CD4-positive, alpha-beta memory T cell (primary cell): ENCODE measurements at regions of chr19 and their contacts with region 1.

Region 1: DNA sequence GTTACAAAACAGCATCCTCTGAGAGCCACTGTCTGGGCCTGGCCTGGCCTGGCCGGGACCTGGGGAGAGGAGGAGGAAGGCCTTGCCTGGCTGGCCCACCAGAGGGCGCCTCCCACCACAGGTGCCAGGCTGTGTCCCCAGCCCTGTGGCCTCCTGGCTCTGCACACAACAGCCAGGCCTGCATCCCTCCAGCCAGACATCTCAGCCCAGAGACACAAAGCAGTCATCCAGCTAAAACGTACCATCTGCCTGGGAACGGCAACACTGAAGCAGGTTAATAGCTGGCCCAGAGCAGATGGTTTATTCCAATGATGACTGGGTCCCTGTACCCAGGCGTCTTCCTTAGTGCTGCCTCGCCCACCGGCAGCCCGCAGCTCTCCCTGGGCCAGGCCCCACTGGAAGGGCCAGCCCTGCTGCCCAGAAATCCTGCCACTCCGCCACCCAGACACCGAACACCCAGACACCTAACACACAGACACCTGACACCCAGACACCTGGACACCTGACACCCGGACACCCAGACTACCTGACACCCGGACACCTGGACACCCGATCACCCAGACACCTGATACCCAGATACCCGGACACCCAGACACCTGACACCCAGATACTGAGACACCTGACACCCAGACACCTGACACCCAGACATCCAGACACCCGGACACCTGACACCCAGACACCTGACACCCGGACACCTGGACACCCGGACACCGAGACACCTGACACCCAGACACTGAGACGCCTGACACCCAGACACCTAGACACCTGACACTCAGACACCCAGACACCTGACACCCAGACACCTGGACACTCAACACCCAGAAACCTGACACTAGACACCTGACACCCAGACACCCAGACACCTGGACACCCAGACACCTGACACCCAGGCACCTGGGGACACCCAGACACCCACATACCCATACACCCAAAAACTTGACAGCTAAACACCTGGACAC is 20.1 kb downstream of the C19orf12 start:
- DNase-seq: peak; percentile 75 to 82 (median 78)
- H3K4me3 ChIP-seq: no peak overlapping the region
- H3K4me3 Mint-ChIP-seq: no peak overlapping the region
- H3K27ac ChIP-seq: no peak overlapping the region
- H3K27ac Mint-ChIP-seq: peak overlapping the region; percentile 58 to 89 (median 78)
- H3K4me1 ChIP-seq: peaks cover 12% of the 10 kb centered on the region
- H3K4me1 Mint-ChIP-seq: peaks cover 7 to 30% (median 12%) of the 10 kb centered on the region in 4 donors
- H3K27me3 ChIP-seq: no peaks in the 10 kb centered on the region
- H3K27me3 Mint-ChIP-seq: no peaks in the 10 kb centered on the region

Region 2: GRCh38 chr19:29467824-29468401 is 227.0 kb before region 1 on chr19:
- CTCF ChIA-PET with region 1: no interaction called
- POLR2A ChIA-PET with region 1: no interaction called
- intact Hi-C with region 1: loop called (anchors 10 kb)
- DNase-seq: peak in 2 of 5 donors; percentile 1 to 9
- H3K4me3 ChIP-seq: no peak overlapping the region
- H3K4me3 Mint-ChIP-seq: no peak overlapping the region
- H3K27ac ChIP-seq: no peak overlapping the region
- H3K27ac Mint-ChIP-seq: no peak overlapping the region
- H3K4me1 ChIP-seq: no peaks in the 10 kb centered on the region
- H3K4me1 Mint-ChIP-seq: no peaks in the 10 kb centered on the region
- H3K27me3 ChIP-seq: no peaks in the 10 kb centered on the region
- H3K27me3 Mint-ChIP-seq: peaks cover 3 to 4% of the 10 kb centered on the region in 2 donors

Region 3: GRCh38 chr19:29505097-29505824 is 189.7 kb before region 1 on chr19:
- CTCF ChIA-PET with region 1: no interaction called
- POLR2A ChIA-PET with region 1: no interaction called
- intact Hi-C with region 1: no loop called
- DNase-seq: no peak
- H3K4me3 ChIP-seq: no peak overlapping the region
- H3K4me3 Mint-ChIP-seq: no peak overlapping the region
- H3K27ac ChIP-seq: no peak overlapping the region
- H3K27ac Mint-ChIP-seq: no peak overlapping the region
- H3K4me1 ChIP-seq: no peaks in the 10 kb centered on the region
- H3K4me1 Mint-ChIP-seq: no peaks in the 10 kb centered on the region
- H3K27me3 ChIP-seq: no peaks in the 10 kb centered on the region
- H3K27me3 Mint-ChIP-seq: peaks cover 15 to 21% of the 10 kb centered on the region in 2 donors

Region 4: DNA sequence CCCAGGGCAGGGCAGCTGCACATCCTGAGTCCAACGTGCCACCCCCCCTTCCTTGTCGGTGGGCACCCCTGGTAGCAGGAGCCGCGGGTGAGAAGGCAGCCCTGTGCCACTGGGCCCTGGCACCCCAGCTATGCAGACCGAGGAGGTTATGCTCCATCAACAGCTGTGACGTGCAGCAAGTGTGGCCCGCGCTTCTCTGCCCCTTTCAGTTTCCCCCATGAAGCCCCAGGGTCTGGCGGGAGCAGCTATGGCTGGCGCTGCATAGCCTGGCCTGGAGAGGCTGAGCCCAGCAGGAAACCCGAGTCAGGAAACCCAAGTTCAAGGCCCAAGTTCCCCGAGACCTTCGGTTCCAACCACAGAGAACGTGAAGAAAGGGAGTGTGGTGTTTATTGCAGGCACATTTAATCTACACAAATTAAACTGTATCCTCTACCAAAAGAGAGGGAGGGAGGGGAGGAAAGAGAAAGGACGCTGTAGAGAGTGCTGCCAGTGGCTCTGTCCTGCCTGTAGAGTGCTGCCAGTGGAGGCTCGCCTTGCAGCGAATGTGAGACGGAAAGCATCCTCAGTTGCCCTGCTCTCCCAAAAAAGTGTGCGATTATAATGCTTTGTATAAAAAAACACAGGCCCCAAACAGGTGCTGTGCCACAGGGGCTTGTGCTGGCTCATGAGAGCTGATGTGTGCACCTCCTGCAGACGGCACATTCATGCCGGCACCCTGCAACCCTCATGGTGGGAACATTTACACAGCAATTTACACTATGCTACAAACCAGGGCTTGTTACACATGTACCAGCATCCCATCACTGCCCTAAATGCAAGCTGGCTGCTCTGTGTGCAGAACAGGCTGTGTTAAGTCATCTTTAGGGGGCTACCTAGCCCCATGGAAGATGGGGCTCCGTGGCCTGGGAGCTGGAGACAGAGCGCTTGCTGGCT is 72.5 kb before region 1 on chr19:
- CTCF ChIA-PET with region 1: interaction called, 16 read pairs
- POLR2A ChIA-PET with region 1: interaction called, 3 read pairs
- intact Hi-C with region 1: no loop called
- DNase-seq: peak; percentile 22 to 55 (median 36)
- H3K4me3 ChIP-seq: no peak overlapping the region
- H3K4me3 Mint-ChIP-seq: peak overlapping the region in 7 of 8 donors; percentile 19 to 85 (median 71)
- H3K27ac ChIP-seq: peak overlapping the region; percentile 35
- H3K27ac Mint-ChIP-seq: peak overlapping the region; percentile 73 to 94 (median 91)
- H3K4me1 ChIP-seq: peaks cover 52% of the 10 kb centered on the region
- H3K4me1 Mint-ChIP-seq: peaks cover 40 to 56% (median 47%) of the 10 kb centered on the region in 4 donors
- H3K27me3 ChIP-seq: no peaks in the 10 kb centered on the region
- H3K27me3 Mint-ChIP-seq: no peaks in the 10 kb centered on the region

Region 5: DNA sequence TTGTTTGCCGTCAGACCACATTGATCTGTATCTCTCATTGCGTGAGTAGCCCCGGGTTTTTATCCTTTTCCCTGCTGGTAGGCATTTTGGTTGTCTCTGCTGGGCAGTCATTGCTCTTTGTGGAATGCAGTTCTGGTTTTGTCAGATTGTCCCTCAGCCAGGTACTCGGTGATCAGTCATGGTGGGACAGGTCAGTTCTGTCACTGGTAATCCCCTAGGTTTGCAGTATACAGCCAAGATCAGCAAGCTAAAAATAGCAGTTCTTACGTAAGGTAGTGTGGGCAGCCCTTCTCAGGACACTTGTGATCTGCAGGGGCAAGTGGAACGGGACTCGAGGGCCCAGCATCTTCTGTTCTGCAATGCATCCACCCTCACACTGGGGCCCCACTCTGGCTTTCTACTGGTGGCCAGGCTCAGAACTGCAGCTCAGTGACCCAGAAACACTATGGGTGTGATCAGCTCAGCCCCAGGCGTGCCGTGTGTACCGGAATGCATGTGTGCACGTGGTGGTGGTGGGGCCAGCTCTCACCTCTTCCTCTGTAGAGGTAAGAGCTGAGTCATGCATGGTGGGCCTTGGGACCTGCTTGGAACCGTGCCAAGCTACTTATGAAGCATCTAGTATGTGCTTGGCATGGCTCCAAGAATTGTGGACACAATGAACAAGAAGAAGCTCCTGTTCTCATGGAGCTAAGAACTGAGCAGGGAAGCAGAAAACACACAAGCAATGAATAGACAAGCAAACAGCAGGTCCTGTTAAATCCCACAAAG is 23.4 kb before region 1 on chr19:
- CTCF ChIA-PET with region 1: interaction called, 158 read pairs
- POLR2A ChIA-PET with region 1: interaction called, 33 read pairs
- intact Hi-C with region 1: loop called (anchors 1 kb)
- DNase-seq: peak; percentile 81 to 96 (median 86)
- H3K4me3 ChIP-seq: peak overlapping the region; percentile 14 to 46
- H3K4me3 Mint-ChIP-seq: peak overlapping the region; percentile 62 to 96 (median 76)
- H3K27ac ChIP-seq: peak overlapping the region; percentile 92
- H3K27ac Mint-ChIP-seq: peak overlapping the region; percentile 93 to 100 (median 98)
- H3K4me1 ChIP-seq: peaks cover 97% of the 10 kb centered on the region
- H3K4me1 Mint-ChIP-seq: peaks cover 58 to 96% (median 79%) of the 10 kb centered on the region in 4 donors
- H3K27me3 ChIP-seq: no peaks in the 10 kb centered on the region
- H3K27me3 Mint-ChIP-seq: no peaks in the 10 kb centered on the region

Region 6: GRCh38 chr19:29708554-29709439 is 13.8 kb after region 1 on chr19:
- CTCF ChIA-PET with region 1: interaction called, 278 read pairs
- POLR2A ChIA-PET with region 1: interaction called, 55 read pairs
- intact Hi-C with region 1: no loop called
- DNase-seq: no peak
- H3K4me3 ChIP-seq: no peak overlapping the region
- H3K4me3 Mint-ChIP-seq: peak overlapping the region in 2 of 8 donors; percentile 26 to 40
- H3K27ac ChIP-seq: no peak overlapping the region
- H3K27ac Mint-ChIP-seq: peak overlapping the region in 5 of 7 donors; percentile 10 to 86 (median 76)
- H3K4me1 ChIP-seq: peaks cover 57% of the 10 kb centered on the region
- H3K4me1 Mint-ChIP-seq: peaks cover 39 to 71% (median 48%) of the 10 kb centered on the region in 4 donors
- H3K27me3 ChIP-seq: no peaks in the 10 kb centered on the region
- H3K27me3 Mint-ChIP-seq: no peaks in the 10 kb centered on the region

Region 7: GRCh38 chr19:29724102-29724641 is 29.2 kb after region 1 on chr19:
- CTCF ChIA-PET with region 1: interaction called, 15 read pairs
- POLR2A ChIA-PET with region 1: interaction called, 3 read pairs
- intact Hi-C with region 1: no loop called
- DNase-seq: peak in 3 of 5 donors; percentile 10 to 19 (median 15)
- H3K4me3 ChIP-seq: no peak overlapping the region
- H3K4me3 Mint-ChIP-seq: peak overlapping the region; percentile 29 to 77 (median 65)
- H3K27ac ChIP-seq: no peak overlapping the region
- H3K27ac Mint-ChIP-seq: peak overlapping the region in 1 of 7 donors; percentile 50
- H3K4me1 ChIP-seq: peaks cover 11% of the 10 kb centered on the region
- H3K4me1 Mint-ChIP-seq: peaks cover 4 to 11% (median 5%) of the 10 kb centered on the region in 4 donors
- H3K27me3 ChIP-seq: peaks cover 4% of the 10 kb centered on the region
- H3K27me3 Mint-ChIP-seq: peaks cover 11 to 29% of the 10 kb centered on the region in 2 donors